ENCODE measurements at regions of chr2 and their contacts with region 1.

Region 1: DNA sequence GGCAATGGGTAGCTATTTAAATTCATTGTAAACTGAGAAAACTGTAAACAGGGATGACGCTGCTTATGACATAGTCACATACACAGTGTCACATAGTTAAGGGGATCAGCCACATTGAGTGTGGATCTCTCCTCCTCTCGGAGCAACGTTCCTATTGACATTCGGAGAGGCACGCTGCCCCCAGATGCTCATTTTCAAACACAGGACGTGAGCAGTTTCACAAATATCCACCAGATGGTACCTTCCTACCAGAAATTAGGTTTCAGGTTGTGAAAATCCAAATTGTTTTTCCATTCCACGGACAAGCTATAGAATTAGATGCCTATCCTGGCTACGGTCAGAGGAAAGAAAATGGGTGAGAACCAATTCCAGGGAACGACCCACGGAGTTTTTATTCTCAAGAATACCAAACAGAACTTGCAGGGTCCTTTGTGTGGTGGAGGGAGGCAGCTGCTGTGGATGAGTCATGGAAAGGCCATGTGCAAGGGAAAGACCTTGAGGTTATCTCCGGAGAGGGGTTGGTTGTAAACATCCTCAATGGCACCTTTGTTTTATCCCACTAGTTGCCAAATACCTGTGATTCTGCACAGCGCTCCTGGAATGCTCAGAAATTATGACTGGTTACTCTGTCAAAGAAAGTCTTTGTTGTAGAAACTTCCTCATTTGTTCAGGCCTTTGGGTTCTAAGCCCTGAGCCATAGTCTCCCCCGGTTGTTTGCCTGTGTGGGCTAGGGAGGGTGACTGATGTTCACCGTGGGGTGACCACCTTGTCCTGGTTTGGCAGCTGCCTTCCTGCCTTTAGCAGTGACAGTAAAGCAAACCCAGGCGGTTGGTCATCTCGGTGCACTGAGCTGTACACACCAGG is 88.0 kb downstream of the ACTR3 start:
- DNase-seq: peak; percentile 74 to 88
- H3K4me3 ChIP-seq: no peak overlapping the region
- H3K4me3 Mint-ChIP-seq: peak overlapping the region; percentile 63
- H3K27ac Mint-ChIP-seq: peak overlapping the region; percentile 92
- H3K4me1 ChIP-seq: peaks cover 23% of the 10 kb centered on the region
- H3K4me1 Mint-ChIP-seq: peaks cover 16% of the 10 kb centered on the region
- H3K27me3 ChIP-seq: no peaks in the 10 kb centered on the region
- H3K27me3 Mint-ChIP-seq: no peaks in the 10 kb centered on the region
- CTCF ChIP-seq: peak; percentile 51 to 73

Region 2: GRCh38 chr2:114006460-114006859 is 28.6 kb after region 1 on chr2:
- CTCF ChIA-PET with region 1: no interaction called
- POLR2A ChIA-PET with region 1: no interaction called
- intact Hi-C with region 1: loop called (anchors 1 kb)
- DNase-seq: peak; percentile 55 to 64
- H3K4me3 ChIP-seq: no peak overlapping the region
- H3K4me3 Mint-ChIP-seq: peak overlapping the region; percentile 52
- H3K27ac Mint-ChIP-seq: peak overlapping the region; percentile 67
- H3K4me1 ChIP-seq: peaks cover 31% of the 10 kb centered on the region
- H3K4me1 Mint-ChIP-seq: peaks cover 24% of the 10 kb centered on the region
- H3K27me3 ChIP-seq: no peaks in the 10 kb centered on the region
- H3K27me3 Mint-ChIP-seq: no peaks in the 10 kb centered on the region
- CTCF ChIP-seq: no peak

Region 3: DNA sequence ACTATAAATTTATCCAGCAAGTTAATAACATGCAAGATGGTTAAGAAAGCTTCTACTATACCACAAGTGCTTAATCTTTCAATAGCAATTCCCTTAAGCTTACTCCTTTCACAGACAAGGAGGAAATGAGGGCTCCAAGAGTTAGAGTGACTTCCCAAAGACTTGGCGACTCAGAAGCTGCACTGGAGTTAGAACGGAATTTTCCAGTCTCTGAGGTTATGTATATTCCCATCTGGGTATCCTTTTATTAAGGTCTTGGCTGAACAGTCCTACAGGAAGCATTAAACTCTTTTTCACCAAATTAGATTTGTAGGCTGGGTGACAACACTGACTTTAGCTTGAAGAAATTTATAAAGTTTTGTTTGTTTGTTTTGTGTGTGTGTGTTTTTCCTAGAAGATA is 207.6 kb after region 1 on chr2:
- CTCF ChIA-PET with region 1: no interaction called
- POLR2A ChIA-PET with region 1: no interaction called
- intact Hi-C with region 1: loop called (anchors 5 kb)
- DNase-seq: no peak
- H3K4me3 ChIP-seq: no peak overlapping the region
- H3K4me3 Mint-ChIP-seq: no peak overlapping the region
- H3K27ac Mint-ChIP-seq: no peak overlapping the region
- H3K4me1 ChIP-seq: no peaks in the 10 kb centered on the region
- H3K4me1 Mint-ChIP-seq: no peaks in the 10 kb centered on the region
- H3K27me3 ChIP-seq: no peaks in the 10 kb centered on the region
- H3K27me3 Mint-ChIP-seq: no peaks in the 10 kb centered on the region
- CTCF ChIP-seq: no peak

Region 4: DNA sequence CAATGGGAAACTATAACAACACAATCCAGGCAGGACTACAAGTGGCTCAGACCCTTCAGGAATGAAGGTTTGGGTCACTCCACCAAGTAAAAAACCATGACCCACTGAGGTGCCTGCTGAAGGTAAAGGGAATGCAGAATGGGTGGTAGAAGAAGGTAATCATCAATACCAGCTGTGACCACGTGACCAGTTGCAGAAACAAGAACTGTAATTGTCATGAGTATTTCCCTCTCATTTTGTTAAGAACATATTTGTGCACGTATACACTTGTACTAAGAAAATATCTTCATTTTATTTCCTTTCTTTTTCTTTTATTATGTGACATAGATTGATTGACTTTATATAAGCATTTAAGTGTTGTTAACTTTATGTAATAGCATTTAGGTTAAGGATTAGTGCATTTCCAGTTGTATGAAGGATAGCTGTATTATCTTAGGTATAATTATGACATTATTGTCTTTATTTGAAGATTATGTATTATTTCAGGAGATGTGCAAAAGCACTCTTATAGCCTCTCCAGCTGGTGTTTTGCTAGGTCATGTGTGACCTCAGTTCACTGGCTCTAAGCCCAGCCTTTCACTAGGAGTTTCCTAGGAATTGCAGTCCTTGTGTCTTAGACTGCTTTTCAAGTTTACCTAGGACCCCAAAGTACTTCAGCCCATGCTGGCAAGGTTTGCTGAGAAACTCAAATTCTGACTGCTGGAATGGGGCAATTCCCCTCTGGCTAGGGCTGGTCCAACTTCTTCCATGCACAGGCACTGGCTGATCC is 338.8 kb after region 1 on chr2:
- CTCF ChIA-PET with region 1: no interaction called
- POLR2A ChIA-PET with region 1: no interaction called
- intact Hi-C with region 1: loop called (anchors 5 kb)
- DNase-seq: no peak
- H3K4me3 ChIP-seq: no peak overlapping the region
- H3K4me3 Mint-ChIP-seq: no peak overlapping the region
- H3K27ac Mint-ChIP-seq: no peak overlapping the region
- H3K4me1 ChIP-seq: no peaks in the 10 kb centered on the region
- H3K4me1 Mint-ChIP-seq: no peaks in the 10 kb centered on the region
- H3K27me3 ChIP-seq: no peaks in the 10 kb centered on the region
- H3K27me3 Mint-ChIP-seq: no peaks in the 10 kb centered on the region
- CTCF ChIP-seq: no peak

Region 5: DNA sequence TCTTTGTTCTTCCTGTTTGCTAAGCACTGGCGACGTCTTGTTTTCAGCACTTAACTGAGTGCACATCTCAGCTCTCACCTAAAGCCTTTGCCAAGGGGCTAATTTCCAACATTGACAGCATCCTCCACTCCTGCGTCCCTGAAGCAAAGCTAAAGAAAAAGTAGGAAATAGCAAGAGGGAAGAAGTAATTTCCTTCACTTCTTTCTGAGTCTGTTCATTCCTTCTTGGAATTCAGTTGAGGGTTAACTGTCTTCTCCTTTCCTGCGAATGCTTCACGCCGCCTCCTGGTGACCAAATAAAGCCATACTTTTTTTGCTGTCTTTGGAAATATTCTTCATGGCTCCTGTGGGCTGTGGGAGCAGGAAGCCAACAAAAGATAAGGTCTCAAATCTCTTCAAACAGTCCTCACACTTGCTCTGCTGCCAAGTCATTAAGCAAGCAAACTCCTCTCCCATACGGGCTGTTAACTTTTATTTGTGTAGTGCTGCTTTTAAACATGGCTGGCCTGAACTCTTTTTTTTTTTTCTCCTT is 565.4 kb after region 1 on chr2:
- CTCF ChIA-PET with region 1: no interaction called
- POLR2A ChIA-PET with region 1: no interaction called
- intact Hi-C with region 1: loop called (anchors 1 kb)
- DNase-seq: peak; percentile 56 to 60
- H3K4me3 ChIP-seq: no peak overlapping the region
- H3K4me3 Mint-ChIP-seq: peak overlapping the region; percentile 18
- H3K27ac Mint-ChIP-seq: peak overlapping the region; percentile 5
- H3K4me1 ChIP-seq: peaks cover 9% of the 10 kb centered on the region
- H3K4me1 Mint-ChIP-seq: peaks cover 16% of the 10 kb centered on the region
- H3K27me3 ChIP-seq: no peaks in the 10 kb centered on the region
- H3K27me3 Mint-ChIP-seq: no peaks in the 10 kb centered on the region
- CTCF ChIP-seq: peak; percentile 54 to 64

Region 6: DNA sequence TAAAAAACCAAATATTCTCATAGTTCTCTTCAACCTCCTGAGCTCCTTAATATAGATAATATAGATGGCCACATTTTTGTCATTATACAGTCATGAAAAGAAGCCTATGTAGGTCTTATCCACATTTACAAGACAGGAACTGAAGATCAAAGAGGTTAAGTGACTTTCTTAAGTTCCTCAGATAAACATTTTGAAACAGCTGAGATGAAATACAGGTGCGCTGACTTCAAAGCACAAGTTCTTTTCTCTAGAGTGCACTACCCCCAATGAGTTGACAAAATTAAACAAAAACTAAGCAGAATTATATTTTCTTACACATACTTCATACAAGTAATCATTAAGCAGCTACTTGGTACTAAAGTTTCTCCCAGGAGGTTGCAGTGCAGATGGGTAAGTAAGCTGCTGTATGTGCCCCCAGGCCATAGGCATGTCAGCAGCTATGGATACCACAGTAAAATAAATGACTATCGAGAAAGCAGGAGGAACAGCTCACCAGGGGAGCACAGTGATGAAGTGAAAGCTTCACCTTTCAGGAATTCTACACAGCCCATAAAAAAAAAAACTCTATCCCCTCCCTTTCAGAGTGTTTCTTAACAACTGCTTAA is 664.4 kb after region 1 on chr2:
- CTCF ChIA-PET with region 1: no interaction called
- POLR2A ChIA-PET with region 1: no interaction called
- intact Hi-C with region 1: loop called (anchors 5 kb)
- DNase-seq: peak; percentile 86 to 89
- H3K4me3 ChIP-seq: no peak overlapping the region
- H3K4me3 Mint-ChIP-seq: peak overlapping the region; percentile 45
- H3K27ac Mint-ChIP-seq: peak overlapping the region; percentile 94
- H3K4me1 ChIP-seq: peaks cover 31% of the 10 kb centered on the region
- H3K4me1 Mint-ChIP-seq: peaks cover 27% of the 10 kb centered on the region
- H3K27me3 ChIP-seq: no peaks in the 10 kb centered on the region
- H3K27me3 Mint-ChIP-seq: no peaks in the 10 kb centered on the region
- CTCF ChIP-seq: no peak

Measured in Caco-2 (cell line).